IMR-90 (cell line): ENCODE measurements at regions of chr7 and their contacts with region 1.

Region 1: GRCh38 chr7:142535123-142535779 is 214.0 kb upstream of the PRSS1 start:
- DNase-seq: peak; percentile 92
- ATAC-seq: peak; percentile 98
- H3K4me3 ChIP-seq: no peak overlapping the region
- H3K27ac ChIP-seq: no peak overlapping the region; the same call in 1 of the 2 replicates
- H3K4me1 ChIP-seq: peaks cover 12% of the 10 kb centered on the region
- H3K27me3 ChIP-seq: no peaks in the 10 kb centered on the region
- CTCF ChIP-seq: peak; percentile 98
- POLR2A ChIP-seq: peak; percentile 42; the same call in 1 of the 2 replicates
- RAD21 ChIP-seq: peak; percentile 98

Region 2: DNA sequence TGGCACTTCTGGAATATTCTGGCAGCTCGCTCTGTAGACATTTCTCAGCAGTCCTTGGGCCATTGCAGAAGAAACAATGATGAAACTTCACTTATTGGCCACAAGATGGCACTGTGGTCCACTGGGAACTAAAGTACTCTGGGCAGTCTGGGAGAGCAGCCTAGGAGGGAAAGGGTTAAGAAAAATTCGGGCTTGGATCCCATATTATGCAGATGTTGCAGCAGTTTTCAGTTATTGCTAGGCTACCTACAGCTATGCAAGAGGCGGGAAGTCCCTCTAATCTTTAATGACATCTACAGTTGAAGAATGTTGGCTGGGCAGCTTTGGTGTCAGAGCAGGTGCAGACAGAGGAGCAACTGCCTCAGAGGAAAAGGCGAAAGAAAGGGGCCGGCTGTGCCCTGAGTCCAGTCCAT is 75.7 kb before region 1 on chr7:
- CTCF ChIA-PET with region 1: interaction called, 11 read pairs
- POLR2A ChIA-PET with region 1: no interaction called
- dilution Hi-C with region 1: no loop called
- in situ Hi-C with region 1: no loop called
- intact Hi-C with region 1: loop called (anchors 1 kb)
- DNase-seq: peak; percentile 90
- ATAC-seq: peak; percentile 50
- H3K4me3 ChIP-seq: no peak overlapping the region
- H3K27ac ChIP-seq: no peak overlapping the region
- H3K4me1 ChIP-seq: peaks cover 22% of the 10 kb centered on the region
- H3K27me3 ChIP-seq: no peaks in the 10 kb centered on the region
- CTCF ChIP-seq: peak; percentile 78
- POLR2A ChIP-seq: no peak
- RAD21 ChIP-seq: peak; percentile 78

Region 3: GRCh38 chr7:142557971-142558582 is 22.8 kb after region 1 on chr7:
- CTCF ChIA-PET with region 1: interaction called, 11 read pairs
- POLR2A ChIA-PET with region 1: no interaction called
- dilution Hi-C with region 1: no loop called
- in situ Hi-C with region 1: no loop called
- intact Hi-C with region 1: no loop called
- DNase-seq: peak; percentile 72
- ATAC-seq: no peak; the same call in 1 of the 2 replicates
- H3K4me3 ChIP-seq: no peak overlapping the region
- H3K27ac ChIP-seq: peak overlapping the region; percentile 67; the same call in 1 of the 2 replicates
- H3K4me1 ChIP-seq: peaks cover 29% of the 10 kb centered on the region
- H3K27me3 ChIP-seq: no peaks in the 10 kb centered on the region
- CTCF ChIP-seq: peak; percentile 59
- POLR2A ChIP-seq: no peak
- RAD21 ChIP-seq: peak; percentile 49

Region 4: GRCh38 chr7:142603870-142604448 is 68.7 kb after region 1 on chr7:
- CTCF ChIA-PET with region 1: interaction called, 17 read pairs
- POLR2A ChIA-PET with region 1: no interaction called
- dilution Hi-C with region 1: no loop called
- in situ Hi-C with region 1: loop called (anchors 5 kb)
- intact Hi-C with region 1: loop called (anchors 1 kb)
- DNase-seq: peak; percentile 63
- ATAC-seq: peak; percentile 73
- H3K4me3 ChIP-seq: peak overlapping the region; percentile 39; the same call in 1 of the 2 replicates
- H3K27ac ChIP-seq: no peak overlapping the region
- H3K4me1 ChIP-seq: no peaks in the 10 kb centered on the region
- H3K27me3 ChIP-seq: 0 out of 2 replicates have a peak, but pooled peaks cover 3% of the 10 kb centered on the region
- CTCF ChIP-seq: peak; percentile 87
- POLR2A ChIP-seq: no peak
- RAD21 ChIP-seq: peak; percentile 82

Region 5: GRCh38 chr7:142711746-142712619 is 176.7 kb after region 1 on chr7:
- CTCF ChIA-PET with region 1: interaction called, 3 read pairs
- POLR2A ChIA-PET with region 1: no interaction called
- dilution Hi-C with region 1: no loop called
- in situ Hi-C with region 1: no loop called
- intact Hi-C with region 1: loop called (anchors 1 kb)
- DNase-seq: peak; percentile 19
- ATAC-seq: peak; percentile 42; the same call in 1 of the 2 replicates
- H3K4me3 ChIP-seq: no peak overlapping the region
- H3K27ac ChIP-seq: no peak overlapping the region
- H3K4me1 ChIP-seq: no peaks in the 10 kb centered on the region
- H3K27me3 ChIP-seq: peaks cover 2% of the 10 kb centered on the region; the same call in 1 of the 2 replicates
- CTCF ChIP-seq: peak; percentile 51
- POLR2A ChIP-seq: no peak
- RAD21 ChIP-seq: peak; percentile 26; the same call in 1 of the 2 replicates

Region 6: GRCh38 chr7:142782922-142783900 is 248.0 kb after region 1 on chr7:
- CTCF ChIA-PET with region 1: interaction called, 72 read pairs
- POLR2A ChIA-PET with region 1: interaction called, 5 read pairs
- dilution Hi-C with region 1: no loop called
- in situ Hi-C with region 1: loop called (anchors 5 kb)
- intact Hi-C with region 1: loop called (anchors 1 kb)
- DNase-seq: peak; percentile 89
- ATAC-seq: peak; percentile 98
- H3K4me3 ChIP-seq: peak overlapping the region; percentile 40
- H3K27ac ChIP-seq: no peak overlapping the region
- H3K4me1 ChIP-seq: no peaks in the 10 kb centered on the region
- H3K27me3 ChIP-seq: peaks cover 11% of the 10 kb centered on the region
- CTCF ChIP-seq: peak; percentile 100
- POLR2A ChIP-seq: no peak
- RAD21 ChIP-seq: peak; percentile 95

Region 7: GRCh38 chr7:143008007-143008901 is 473.0 kb after region 1 on chr7:
- CTCF ChIA-PET with region 1: no interaction called
- POLR2A ChIA-PET with region 1: no interaction called
- dilution Hi-C with region 1: no loop called
- in situ Hi-C with region 1: no loop called
- intact Hi-C with region 1: loop called (anchors 10 kb)
- DNase-seq: peak; percentile 41
- ATAC-seq: peak; percentile 99
- H3K4me3 ChIP-seq: no peak overlapping the region
- H3K27ac ChIP-seq: no peak overlapping the region
- H3K4me1 ChIP-seq: no peaks in the 10 kb centered on the region
- H3K27me3 ChIP-seq: peaks cover 2% of the 10 kb centered on the region; the same call in 1 of the 2 replicates
- CTCF ChIP-seq: peak; percentile 89
- POLR2A ChIP-seq: no peak
- RAD21 ChIP-seq: peak; percentile 82